ENCODE measurements at regions of chr14 and their contacts with region 1.

Region 1: DNA sequence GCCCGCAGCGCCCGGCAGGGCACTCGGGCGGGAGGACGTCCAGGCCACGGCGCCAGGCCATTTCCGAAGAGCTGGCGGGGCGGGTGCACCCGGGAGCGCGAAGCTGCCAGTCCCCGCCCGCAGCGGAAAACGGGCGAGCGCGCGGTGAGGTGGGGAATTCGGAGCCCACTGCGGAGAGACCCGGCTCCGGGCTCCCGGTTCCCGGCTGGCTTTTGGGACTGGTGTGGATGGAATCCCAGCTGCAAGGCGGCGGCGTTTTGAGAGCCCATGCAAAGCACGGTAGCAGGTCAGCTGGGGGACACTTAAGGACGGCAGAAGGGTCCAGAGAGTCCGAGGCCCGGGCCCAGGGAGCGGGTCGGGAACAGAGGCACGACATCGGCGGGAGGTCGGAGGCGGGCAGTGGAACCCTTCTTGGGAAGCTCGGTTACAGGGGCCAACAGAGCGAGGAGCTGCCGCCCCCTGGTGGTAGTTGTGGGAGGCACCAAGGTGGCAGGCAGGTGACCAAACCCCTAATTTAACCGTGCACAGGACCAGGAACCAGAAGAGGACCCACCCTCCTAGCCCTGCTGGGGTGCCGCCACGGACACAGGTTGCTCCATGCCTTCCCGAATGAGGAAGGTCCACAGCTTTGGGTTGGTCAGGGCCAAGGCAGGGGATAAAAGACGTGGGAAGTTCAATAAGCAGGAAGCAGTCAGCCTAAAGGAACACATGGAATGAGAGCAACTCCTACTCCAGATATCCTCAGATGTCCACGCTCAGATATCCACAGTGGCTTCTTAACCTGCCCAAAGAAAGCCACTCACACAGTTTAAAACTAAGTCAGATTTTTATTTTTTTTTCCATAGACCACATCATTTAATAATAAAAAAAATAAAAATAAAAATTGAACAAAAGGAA is 685 bp upstream of the CDH24 start:
- DNase-seq: peak; percentile 79
- ATAC-seq: peak; percentile 73
- H3K4me3 ChIP-seq: peak overlapping the region; percentile 59 to 61
- H3K27ac ChIP-seq: peak overlapping the region; percentile 84
- H3K4me1 ChIP-seq: peaks cover 24 to 44% of the 10 kb centered on the region in 2 experiments
- H3K27me3 ChIP-seq: no peaks in the 10 kb centered on the region
- CTCF ChIP-seq: peak; percentile 83 to 95 (median 92)
- POLR2A ChIP-seq: no peak
- RAD21 ChIP-seq: peak; percentile 87

Region 2: GRCh38 chr14:22556990-22557623 is 500.9 kb before region 1 on chr14:
- CTCF ChIA-PET with region 1: interaction called, 3 read pairs
- POLR2A ChIA-PET with region 1: no interaction called
- RAD21 ChIA-PET with region 1: no interaction called
- intact Hi-C with region 1: loop called (anchors 5 kb)
- DNase-seq: peak; percentile 48
- ATAC-seq: peak; percentile 92
- H3K4me3 ChIP-seq: 0 out of 4 replicates have a peak overlapping the region, but pooled peaks of 1 of the 2 experiments have one; percentile 23
- H3K27ac ChIP-seq: no peak overlapping the region
- H3K4me1 ChIP-seq: peaks cover 5 to 24% of the 10 kb centered on the region in 2 experiments
- H3K27me3 ChIP-seq: no peaks in the 10 kb centered on the region
- CTCF ChIP-seq: peak; percentile 95 to 100 (median 99)
- POLR2A ChIP-seq: no peak
- RAD21 ChIP-seq: peak; percentile 96

Region 3: DNA sequence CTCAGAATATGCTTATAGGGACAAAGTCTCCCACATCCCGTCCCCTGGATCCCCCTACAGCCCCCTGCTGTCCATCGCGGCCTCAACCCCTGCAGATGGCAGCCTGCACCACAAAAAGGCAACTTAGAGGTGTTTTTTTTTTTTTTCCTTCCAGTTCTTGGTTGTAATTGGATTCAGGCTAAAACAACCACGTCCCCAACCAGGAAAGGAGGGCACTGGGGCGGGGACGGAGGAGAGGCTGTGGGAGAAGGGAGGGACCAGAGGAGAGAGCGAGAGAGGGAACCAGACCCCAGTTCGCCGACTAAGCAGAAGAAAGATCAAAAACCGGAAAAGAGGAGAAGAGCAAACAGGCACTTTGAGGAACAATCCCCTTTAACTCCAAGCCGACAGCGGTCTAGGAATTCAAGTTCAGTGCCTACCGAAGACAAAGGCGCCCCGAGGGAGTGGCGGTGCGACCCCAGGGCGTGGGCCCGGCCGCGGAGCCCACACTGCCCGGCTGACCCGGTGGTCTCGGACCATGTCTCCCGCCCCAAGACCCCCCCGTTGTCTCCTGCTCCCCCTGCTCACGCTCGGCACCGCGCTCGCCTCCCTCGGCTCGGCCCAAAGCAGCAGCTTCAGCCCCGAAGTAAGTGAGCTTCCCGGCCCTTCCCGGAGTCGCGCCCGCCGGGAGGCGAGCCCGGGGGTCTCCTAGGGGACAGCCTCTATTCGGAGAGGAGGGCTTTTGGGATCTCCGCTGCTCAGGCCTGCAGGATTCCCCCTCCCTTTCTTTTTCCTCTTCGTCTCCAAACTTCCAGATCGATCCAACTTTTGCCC is 221.5 kb before region 1 on chr14 and contains the start of gene MMP14:
- CTCF ChIA-PET with region 1: no interaction called
- POLR2A ChIA-PET with region 1: no interaction called
- RAD21 ChIA-PET with region 1: no interaction called
- intact Hi-C with region 1: no loop called
- DNase-seq: no peak
- ATAC-seq: peak; percentile 64
- H3K4me3 ChIP-seq: peak within 1 kb of the TSS; percentile 56 to 62
- H3K27ac ChIP-seq: peak within 1 kb of the TSS; percentile 48; the same call in 1 of the 2 replicates
- H3K4me1 ChIP-seq: peaks cover 0 to 14% of the 10 kb centered on the region in 2 experiments; a peak in 1 of 4 replicates
- H3K27me3 ChIP-seq: no peaks in the 10 kb centered on the region
- CTCF ChIP-seq: 0 out of 6 replicates have a peak, but pooled peaks of 2 of the 3 experiments have one; percentile 3 to 12
- POLR2A ChIP-seq: no peak
- RAD21 ChIP-seq: no peak; the same call in 1 of the 2 replicates
- total RNA-seq, gene MMP14: 17.8 TPM

Region 4: DNA sequence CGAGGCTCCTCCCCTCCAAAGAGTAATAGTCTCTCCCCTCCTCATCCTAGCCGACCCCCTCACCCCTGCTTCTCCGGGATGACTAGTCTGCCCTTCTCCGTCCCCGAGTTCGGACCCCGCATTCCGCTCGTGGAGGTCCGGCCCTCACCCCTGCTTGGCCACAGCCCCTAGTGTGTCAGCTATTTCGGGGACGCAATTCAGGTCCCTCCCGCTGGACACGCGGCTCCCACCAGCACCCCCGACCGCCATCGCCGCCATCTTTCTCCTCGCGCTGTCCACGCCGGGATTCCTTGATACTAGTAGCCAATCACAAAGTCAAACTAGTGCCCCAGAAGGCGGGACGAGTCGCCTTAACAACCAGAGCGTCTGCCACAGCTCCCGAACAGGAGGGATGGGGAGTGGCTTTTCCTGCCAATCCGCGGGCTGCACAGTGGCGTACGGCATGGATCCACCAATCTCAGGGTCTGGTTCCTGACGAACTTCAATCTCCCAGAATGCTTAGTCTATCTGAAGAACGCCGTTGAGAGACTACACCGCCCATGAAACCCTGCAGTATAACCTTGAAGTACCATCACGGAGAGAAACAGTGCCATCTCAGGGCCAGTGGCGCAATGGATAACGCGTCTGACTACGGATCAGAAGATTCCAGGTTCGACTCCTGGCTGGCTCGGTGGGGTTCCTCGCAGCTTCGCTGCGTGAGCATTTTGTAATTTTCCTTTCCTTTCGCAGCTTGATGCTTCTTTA is 128.7 kb before region 1 on chr14 and contains the start of gene PRMT5:
- CTCF ChIA-PET with region 1: interaction called, 20 read pairs
- POLR2A ChIA-PET with region 1: no interaction called
- RAD21 ChIA-PET with region 1: no interaction called
- intact Hi-C with region 1: no loop called
- DNase-seq: peak; percentile 99
- ATAC-seq: peak; percentile 91
- H3K4me3 ChIP-seq: peak within 1 kb of the TSS; percentile 75 to 96
- H3K27ac ChIP-seq: peak within 1 kb of the TSS; percentile 83
- H3K4me1 ChIP-seq: peaks cover 31 to 64% of the 10 kb centered on the region in 2 experiments
- H3K27me3 ChIP-seq: no peaks in the 10 kb centered on the region
- CTCF ChIP-seq: no peak
- POLR2A ChIP-seq: peak; percentile 78
- RAD21 ChIP-seq: no peak
- total RNA-seq, gene PRMT5: 186 TPM

Region 5: GRCh38 chr14:22973217-22974032 is 84.6 kb before region 1 on chr14:
- CTCF ChIA-PET with region 1: interaction called, 13 read pairs
- POLR2A ChIA-PET with region 1: interaction called, 3 read pairs
- RAD21 ChIA-PET with region 1: interaction called in 1 of 2 experiments, 8 read pairs
- intact Hi-C with region 1: no loop called
- DNase-seq: no peak
- ATAC-seq: peak; percentile 64
- H3K4me3 ChIP-seq: no peak overlapping the region
- H3K27ac ChIP-seq: no peak overlapping the region
- H3K4me1 ChIP-seq: peaks cover 36 to 39% of the 10 kb centered on the region in 2 experiments
- H3K27me3 ChIP-seq: no peaks in the 10 kb centered on the region
- CTCF ChIP-seq: peak in 2 of 3 experiments; percentile 61 to 75; a peak in 4 of 6 replicates
- POLR2A ChIP-seq: no peak
- RAD21 ChIP-seq: no peak

Region 6: GRCh38 chr14:22994762-22995275 is 63.2 kb before region 1 on chr14:
- CTCF ChIA-PET with region 1: interaction called, 59 read pairs
- POLR2A ChIA-PET with region 1: interaction called, 5 read pairs
- RAD21 ChIA-PET with region 1: interaction called, 4 to 10 read pairs
- intact Hi-C with region 1: loop called (anchors 1 kb)
- DNase-seq: no peak
- ATAC-seq: peak; percentile 96
- H3K4me3 ChIP-seq: no peak overlapping the region
- H3K27ac ChIP-seq: 0 out of 2 replicates have a peak overlapping the region, but pooled peaks have one; percentile 18
- H3K4me1 ChIP-seq: peaks cover 4 to 8% of the 10 kb centered on the region in 2 experiments; a peak in 3 of 4 replicates
- H3K27me3 ChIP-seq: no peaks in the 10 kb centered on the region
- CTCF ChIP-seq: peak; percentile 65 to 70 (median 67)
- POLR2A ChIP-seq: no peak
- RAD21 ChIP-seq: peak; percentile 72

Region 7: DNA sequence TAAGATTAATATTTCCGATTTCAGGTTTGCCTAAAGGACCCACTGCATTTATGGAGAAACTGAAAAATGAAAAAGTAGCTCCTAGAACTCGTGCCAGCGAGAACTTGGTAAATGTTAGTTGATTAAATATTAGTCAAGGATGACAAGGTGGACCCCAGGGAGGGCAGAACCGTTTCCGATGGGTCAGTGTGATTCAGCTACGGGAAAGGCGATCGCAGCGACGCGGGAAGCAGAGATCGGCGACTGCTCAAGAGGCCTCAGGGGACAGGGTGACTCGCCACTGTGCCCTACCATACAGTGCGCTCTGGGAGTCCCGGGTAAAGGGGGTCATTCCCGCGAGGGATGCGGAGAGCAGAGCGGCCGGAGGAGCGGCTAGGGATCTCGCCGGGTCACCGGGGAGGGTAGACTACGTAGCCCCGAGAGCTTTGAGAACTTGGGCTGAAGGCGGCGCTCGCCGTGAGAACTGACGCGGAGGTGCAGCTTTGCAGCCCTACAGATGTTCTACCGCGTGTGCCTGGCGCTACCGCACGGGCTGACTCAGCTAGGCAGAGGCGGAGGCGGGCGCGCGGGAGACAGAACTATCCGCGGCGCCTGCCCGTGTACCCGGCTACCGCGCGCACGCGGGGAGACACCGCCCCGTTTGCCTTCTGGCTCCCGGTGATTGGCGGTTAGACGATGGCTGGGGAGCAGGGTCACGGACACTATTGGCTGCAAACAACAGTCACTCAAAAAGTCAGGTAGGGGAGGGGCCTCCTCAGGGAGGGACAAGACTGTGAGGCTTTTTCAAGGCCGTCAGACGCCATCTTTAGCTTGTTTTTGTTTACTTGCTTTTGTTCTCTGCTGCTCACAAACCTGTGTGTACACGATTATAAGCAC is 51.2 kb before region 1 on chr14:
- CTCF ChIA-PET with region 1: interaction called, 10 read pairs
- POLR2A ChIA-PET with region 1: interaction called, 10 read pairs
- RAD21 ChIA-PET with region 1: no interaction called
- intact Hi-C with region 1: loop called (anchors 5 kb)
- DNase-seq: peak; percentile 96
- ATAC-seq: peak; percentile 93
- H3K4me3 ChIP-seq: peak overlapping the region; percentile 64 to 71
- H3K27ac ChIP-seq: peak overlapping the region; percentile 97
- H3K4me1 ChIP-seq: peaks cover 23 to 60% of the 10 kb centered on the region in 2 experiments
- H3K27me3 ChIP-seq: no peaks in the 10 kb centered on the region
- CTCF ChIP-seq: no peak; a peak in 1 of 6 replicates
- POLR2A ChIP-seq: peak; percentile 94
- RAD21 ChIP-seq: no peak

Region 8: GRCh38 chr14:23076785-23077408 is 18.9 kb after region 1 on chr14:
- CTCF ChIA-PET with region 1: interaction called, 14 read pairs
- POLR2A ChIA-PET with region 1: interaction called, 7 read pairs
- RAD21 ChIA-PET with region 1: no interaction called
- intact Hi-C with region 1: no loop called
- DNase-seq: no peak
- ATAC-seq: peak; percentile 49
- H3K4me3 ChIP-seq: no peak overlapping the region
- H3K27ac ChIP-seq: no peak overlapping the region; the same call in 1 of the 2 replicates
- H3K4me1 ChIP-seq: peaks cover 21 to 54% of the 10 kb centered on the region in 2 experiments
- H3K27me3 ChIP-seq: no peaks in the 10 kb centered on the region
- CTCF ChIP-seq: peak; percentile 45 to 79 (median 62); a peak in 5 of 6 replicates
- POLR2A ChIP-seq: no peak
- RAD21 ChIP-seq: peak; percentile 53